ENCODE measurements at regions of chr1 and their contacts with region 1.

Region 1: DNA sequence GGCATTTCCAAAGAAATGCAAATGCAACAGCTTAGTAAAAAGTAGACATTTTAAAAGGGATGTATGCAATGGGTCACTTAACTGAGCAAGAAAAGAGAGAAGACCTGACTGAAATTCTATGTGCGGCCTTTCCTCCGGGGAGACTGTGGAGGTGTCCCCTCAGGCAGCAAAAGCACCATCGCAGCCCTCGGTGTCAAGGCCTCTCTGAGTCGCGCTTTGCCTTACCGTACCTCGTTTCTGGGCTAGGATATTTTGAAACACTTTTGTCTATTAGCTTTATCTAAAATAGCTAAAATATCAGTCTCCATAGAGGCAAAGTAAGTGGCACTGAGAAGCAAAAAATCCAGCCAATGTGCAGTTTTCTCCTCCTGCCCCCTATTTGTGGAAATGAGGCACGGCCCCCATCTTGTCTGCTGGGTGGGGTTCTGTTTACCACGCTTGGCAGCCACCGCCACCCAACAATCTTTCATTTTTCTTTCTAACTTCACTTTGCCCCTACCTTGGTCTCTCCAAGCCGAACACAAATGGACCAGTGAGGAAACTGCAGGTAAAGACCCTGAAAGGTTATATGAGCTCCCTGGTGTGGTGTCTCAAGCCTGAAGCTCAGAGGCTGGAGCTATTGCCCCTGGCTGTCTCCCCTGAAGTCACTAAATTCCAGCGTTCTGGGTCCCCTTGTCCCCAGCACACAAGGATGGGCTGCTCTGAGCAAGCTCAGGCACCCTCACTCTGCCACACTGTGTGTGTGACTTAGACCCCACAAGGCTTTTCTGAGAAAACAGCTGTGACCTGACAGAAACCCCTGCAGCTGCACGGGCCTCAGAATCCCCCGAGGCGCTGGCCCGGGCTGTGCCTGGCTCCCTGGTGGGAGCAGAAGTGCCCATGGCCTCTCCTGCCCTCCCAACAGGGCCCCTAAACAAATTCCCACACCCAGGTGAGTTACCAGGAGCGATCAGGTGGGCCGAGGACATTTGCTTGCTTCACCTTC is 1.6 kb downstream of the CD247 start:
- H3K4me3 ChIP-seq: no peak overlapping the region
- H3K27ac ChIP-seq: no peak overlapping the region
- H3K4me1 ChIP-seq: no peaks in the 10 kb centered on the region
- CTCF ChIP-seq: no peak

Region 2: DNA sequence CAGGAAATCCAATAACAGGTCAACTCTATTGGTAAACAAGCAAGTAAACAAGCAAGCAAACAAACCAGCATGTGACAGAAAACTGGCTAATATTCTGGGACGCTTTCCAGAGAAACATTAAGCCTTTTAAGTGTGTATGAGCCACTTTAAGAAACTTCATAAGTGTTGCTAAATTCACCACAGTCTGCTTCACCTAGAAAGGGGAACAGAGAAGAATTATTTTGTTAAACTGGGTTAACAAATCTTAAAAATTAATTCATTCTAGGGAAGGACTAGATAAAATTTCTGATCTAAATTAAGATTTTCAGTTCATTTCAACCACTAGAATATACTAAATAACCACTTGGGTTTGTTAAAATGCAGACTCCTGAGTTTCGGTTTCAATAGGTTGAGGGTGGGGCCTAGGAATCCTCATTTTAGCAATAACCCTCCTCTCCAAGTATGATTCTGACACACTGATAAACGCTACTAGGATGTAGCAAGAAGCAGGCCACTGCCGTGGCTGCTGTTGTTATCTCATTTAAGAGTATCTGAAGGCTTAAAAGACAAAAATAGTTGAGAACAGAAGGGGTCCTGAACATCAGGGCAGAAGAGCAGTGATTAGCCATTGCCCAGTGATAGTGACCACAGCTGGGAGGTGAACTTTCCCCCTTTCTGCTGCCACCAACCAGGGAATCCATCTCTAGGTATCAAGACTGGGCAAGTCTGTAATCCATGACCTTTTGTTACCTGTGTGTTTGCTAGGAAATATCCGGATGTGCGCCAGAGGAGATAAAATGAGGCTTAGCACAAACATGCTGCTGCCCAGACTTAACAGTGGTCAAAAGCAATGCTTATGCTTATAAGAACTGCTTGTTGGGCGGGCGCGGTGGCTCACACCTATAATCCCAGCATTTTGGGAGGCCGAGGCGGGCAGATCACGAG is 25.7 kb after region 1 on chr1:
- CTCF ChIA-PET with region 1: interaction called, 10 read pairs
- POLR2A ChIA-PET with region 1: no interaction called
- H3K4me3 ChIP-seq: no peak overlapping the region
- H3K27ac ChIP-seq: no peak overlapping the region
- H3K4me1 ChIP-seq: no peaks in the 10 kb centered on the region
- CTCF ChIP-seq: no peak

Measured in HEK293 (cell line).